Sigmoid colon (tissue), 7 donors: ENCODE measurements at regions of chr9 and their contacts with region 1.

Region 1: DNA sequence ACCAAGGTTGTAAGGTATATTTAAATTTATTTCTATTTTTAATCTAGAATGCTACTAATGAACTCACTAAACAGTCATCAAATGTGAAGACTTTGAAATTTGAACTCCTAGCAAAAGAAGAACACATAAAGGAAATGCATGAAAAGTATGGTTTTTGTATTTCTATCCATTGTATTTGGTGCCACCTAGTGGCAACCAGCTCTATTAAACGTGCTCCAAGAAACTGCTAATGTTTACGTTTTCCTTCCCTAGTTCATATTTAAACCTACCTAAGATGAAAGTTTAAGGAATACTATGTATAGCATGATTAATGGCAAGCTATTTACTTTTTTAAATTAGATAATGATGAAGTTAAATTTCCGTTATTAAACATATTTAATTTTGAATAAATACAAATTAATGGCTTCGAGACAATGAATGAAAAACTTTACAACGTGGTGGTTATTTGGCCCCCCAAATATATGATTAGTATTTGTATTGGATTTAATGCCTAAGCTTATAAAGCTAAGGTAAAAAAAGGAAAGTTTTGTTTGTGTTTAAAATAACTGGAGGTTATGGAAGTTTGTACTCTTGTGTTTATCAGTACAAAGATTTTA is 115.9 kb upstream of the SH3GL2 start:
- DNase-seq: no peak
- H3K4me3 ChIP-seq: no peak overlapping the region
- H3K27ac ChIP-seq: no peak overlapping the region
- H3K4me1 ChIP-seq: no peaks in the 10 kb centered on the region
- H3K27me3 ChIP-seq: no peaks in the 10 kb centered on the region
- CTCF ChIP-seq: peak; percentile 24 to 78 (median 59)
- EP300 ChIP-seq: no peak
- POLR2A ChIP-seq: no peak

Region 2: GRCh38 chr9:15837079-15837679 is 1625.8 kb before region 1 on chr9:
- intact Hi-C with region 1: loop called (anchors 10 kb)
- DNase-seq: no peak
- H3K4me3 ChIP-seq: no peak overlapping the region
- H3K27ac ChIP-seq: no peak overlapping the region
- H3K4me1 ChIP-seq: no peaks in the 10 kb centered on the region
- H3K27me3 ChIP-seq: no peaks in the 10 kb centered on the region
- CTCF ChIP-seq: peak in 3 of 4 experiments; percentile 42 to 69 (median 48)
- EP300 ChIP-seq: no peak
- POLR2A ChIP-seq: no peak

Region 3: DNA sequence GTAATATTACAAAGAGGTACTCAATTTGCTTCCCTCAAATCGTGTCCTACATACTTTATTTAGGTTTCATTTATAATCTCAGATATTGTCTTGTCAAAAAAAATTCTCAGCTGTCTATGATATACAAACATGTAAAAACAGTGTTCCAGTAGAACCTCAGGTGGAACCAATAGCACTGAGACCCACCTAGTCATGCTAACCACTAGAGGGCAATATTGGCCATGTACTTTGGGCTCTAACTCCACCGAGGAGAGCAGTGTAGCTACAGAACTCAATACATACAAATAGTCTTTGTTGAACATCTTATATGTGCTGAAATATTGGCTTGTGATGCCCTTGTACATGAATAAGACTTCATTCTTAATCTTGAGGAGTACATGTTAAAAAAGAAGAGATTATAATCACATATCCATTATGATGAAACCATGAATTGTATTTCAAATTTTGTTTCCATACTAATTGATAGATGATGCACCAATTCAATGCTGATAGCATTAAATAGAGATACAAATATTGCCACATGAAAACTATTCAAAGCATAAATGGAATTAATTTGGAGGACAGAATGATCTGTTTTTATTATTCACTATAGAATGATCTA is 399.3 kb before region 1 on chr9:
- intact Hi-C with region 1: loop called (anchors 5 kb)
- DNase-seq: no peak
- H3K4me3 ChIP-seq: no peak overlapping the region
- H3K27ac ChIP-seq: no peak overlapping the region
- H3K4me1 ChIP-seq: no peaks in the 10 kb centered on the region
- H3K27me3 ChIP-seq: no peaks in the 10 kb centered on the region
- CTCF ChIP-seq: peak in 3 of 4 experiments; percentile 34 to 65 (median 59)
- EP300 ChIP-seq: no peak
- POLR2A ChIP-seq: no peak

Region 4: GRCh38 chr9:17361378-17361777 is 101.6 kb before region 1 on chr9:
- intact Hi-C with region 1: no loop called
- DNase-seq: no peak
- H3K4me3 ChIP-seq: no peak overlapping the region
- H3K27ac ChIP-seq: no peak overlapping the region
- H3K4me1 ChIP-seq: no peaks in the 10 kb centered on the region
- H3K27me3 ChIP-seq: no peaks in the 10 kb centered on the region
- CTCF ChIP-seq: no peak
- EP300 ChIP-seq: no peak
- POLR2A ChIP-seq: no peak

Region 5: DNA sequence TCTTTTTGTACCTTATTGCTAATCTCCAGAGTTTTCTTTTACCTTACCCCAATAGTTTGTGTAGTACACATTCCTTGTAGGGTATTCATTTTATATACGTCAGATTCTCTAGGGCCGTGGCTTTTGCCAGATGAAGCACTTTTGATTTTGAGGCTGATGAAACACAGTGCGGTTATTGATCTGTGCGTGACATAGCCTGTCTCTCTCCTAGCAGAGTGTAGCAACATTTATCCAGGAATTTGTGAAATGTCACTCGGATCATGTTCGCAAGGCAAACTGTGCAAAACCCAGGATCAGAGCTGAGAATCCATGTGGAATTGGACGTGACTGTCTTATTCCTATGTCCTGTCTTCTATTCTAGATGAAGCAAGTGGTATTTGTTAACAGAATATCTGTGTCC is 26.1 kb before region 1 on chr9:
- intact Hi-C with region 1: no loop called
- DNase-seq: no peak
- H3K4me3 ChIP-seq: no peak overlapping the region
- H3K27ac ChIP-seq: no peak overlapping the region
- H3K4me1 ChIP-seq: no peaks in the 10 kb centered on the region
- H3K27me3 ChIP-seq: no peaks in the 10 kb centered on the region
- CTCF ChIP-seq: no peak
- EP300 ChIP-seq: no peak
- POLR2A ChIP-seq: no peak

Region 6: GRCh38 chr9:17725399-17726010 is 262.5 kb after region 1 on chr9:
- intact Hi-C with region 1: no loop called
- DNase-seq: no peak
- H3K4me3 ChIP-seq: no peak overlapping the region
- H3K27ac ChIP-seq: no peak overlapping the region
- H3K4me1 ChIP-seq: no peaks in the 10 kb centered on the region
- H3K27me3 ChIP-seq: no peaks in the 10 kb centered on the region
- CTCF ChIP-seq: no peak
- EP300 ChIP-seq: no peak
- POLR2A ChIP-seq: no peak